Thyroid gland (tissue), 4 donors: ENCODE measurements at regions of chr13 and their contacts with region 1.

Region 1: GRCh38 chr13:96075953-96076543 is 13.9 kb upstream of the HS6ST3 start:
- DNase-seq: no peak
- H3K4me3 ChIP-seq: no peak overlapping the region
- H3K27ac ChIP-seq: no peak overlapping the region
- H3K4me1 ChIP-seq: no peaks in the 10 kb centered on the region
- H3K27me3 ChIP-seq: no peaks in the 10 kb centered on the region
- CTCF ChIP-seq: peak; percentile 15 to 67 (median 48)
- POLR2A ChIP-seq: no peak

Region 2: GRCh38 chr13:96020155-96020575 is 55.9 kb before region 1 on chr13:
- intact Hi-C with region 1: loop called (anchors 10 kb)
- DNase-seq: peak; percentile 48 to 50
- H3K4me3 ChIP-seq: no peak overlapping the region
- H3K27ac ChIP-seq: no peak overlapping the region
- H3K4me1 ChIP-seq: no peaks in the 10 kb centered on the region
- H3K27me3 ChIP-seq: no peaks in the 10 kb centered on the region
- CTCF ChIP-seq: peak; percentile 20 to 83 (median 62)
- POLR2A ChIP-seq: no peak